Activated T-helper 1 cell treated with anti-CD3 and anti-CD28 coated beads, Interleukin-12 subunit alpha, Interleukin-12 subunit beta, Interleukin-2, Interleukin-4 antibody, amounts not matched to agents 30 ng/mL and 10 ng/mL and 1 ng/mL, durations not matched to agents 14 hours and 24 hours and 36 hours (primary cell): ENCODE measurements at regions of chr1 and their contacts with region 1.

Region 1: DNA sequence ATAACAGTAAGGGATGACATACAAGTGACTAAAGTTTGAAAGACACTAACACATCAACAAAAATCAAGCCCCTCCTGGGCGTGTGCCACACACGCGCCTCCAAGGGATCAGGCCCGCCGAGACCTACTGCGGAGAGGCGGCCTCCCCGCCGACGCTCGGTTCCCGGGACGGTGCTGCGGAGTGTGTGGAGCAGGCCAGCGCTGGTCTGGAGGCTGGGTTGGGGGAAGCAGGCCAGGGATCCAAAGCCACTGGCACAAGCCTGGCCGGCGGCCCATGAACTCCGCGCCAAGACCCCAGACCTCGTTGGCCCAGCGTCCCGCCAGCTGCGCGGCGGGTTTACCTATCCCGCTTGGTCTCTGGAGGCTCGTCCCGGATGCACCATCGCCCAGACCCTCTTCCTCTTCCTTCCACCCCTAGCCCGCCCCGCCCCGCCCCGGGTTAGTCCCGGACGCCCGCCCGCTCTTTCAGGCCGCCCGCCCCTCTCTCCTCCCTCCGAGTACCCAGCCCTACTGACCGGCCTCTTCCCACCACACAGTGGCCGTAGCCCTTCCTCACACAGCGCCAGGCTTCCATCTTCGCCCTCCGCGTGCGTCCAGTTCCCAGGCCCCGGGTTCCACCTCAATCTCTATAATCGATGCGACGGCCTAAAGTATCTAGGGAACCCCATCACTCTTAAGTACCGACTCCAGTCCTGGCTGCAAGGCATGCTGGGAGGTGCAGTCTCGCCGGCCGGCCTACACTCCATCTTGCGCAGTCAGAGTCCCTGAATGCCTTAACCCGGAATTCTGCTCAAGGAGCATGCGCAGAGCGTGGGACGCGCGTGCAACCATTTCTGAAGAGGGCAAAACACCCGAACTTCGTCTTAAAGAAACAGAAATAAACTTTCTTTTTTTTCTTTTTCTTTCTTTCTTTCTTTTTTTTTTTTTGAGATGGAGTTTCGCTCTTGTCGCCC is at the start of gene ANGEL2:
- DNase-seq: peak; percentile 95
- H3K4me3 Mint-ChIP-seq: peak within 1 kb of the TSS; percentile 99
- H3K27ac Mint-ChIP-seq: peak within 1 kb of the TSS; percentile 99
- H3K4me1 Mint-ChIP-seq: peaks cover 35% of the 10 kb centered on the region
- H3K27me3 Mint-ChIP-seq: peaks cover 9% of the 10 kb centered on the region
- total RNA-seq, gene ANGEL2: 44.2 and 46.1 TPM in 2 replicates

Region 2: DNA sequence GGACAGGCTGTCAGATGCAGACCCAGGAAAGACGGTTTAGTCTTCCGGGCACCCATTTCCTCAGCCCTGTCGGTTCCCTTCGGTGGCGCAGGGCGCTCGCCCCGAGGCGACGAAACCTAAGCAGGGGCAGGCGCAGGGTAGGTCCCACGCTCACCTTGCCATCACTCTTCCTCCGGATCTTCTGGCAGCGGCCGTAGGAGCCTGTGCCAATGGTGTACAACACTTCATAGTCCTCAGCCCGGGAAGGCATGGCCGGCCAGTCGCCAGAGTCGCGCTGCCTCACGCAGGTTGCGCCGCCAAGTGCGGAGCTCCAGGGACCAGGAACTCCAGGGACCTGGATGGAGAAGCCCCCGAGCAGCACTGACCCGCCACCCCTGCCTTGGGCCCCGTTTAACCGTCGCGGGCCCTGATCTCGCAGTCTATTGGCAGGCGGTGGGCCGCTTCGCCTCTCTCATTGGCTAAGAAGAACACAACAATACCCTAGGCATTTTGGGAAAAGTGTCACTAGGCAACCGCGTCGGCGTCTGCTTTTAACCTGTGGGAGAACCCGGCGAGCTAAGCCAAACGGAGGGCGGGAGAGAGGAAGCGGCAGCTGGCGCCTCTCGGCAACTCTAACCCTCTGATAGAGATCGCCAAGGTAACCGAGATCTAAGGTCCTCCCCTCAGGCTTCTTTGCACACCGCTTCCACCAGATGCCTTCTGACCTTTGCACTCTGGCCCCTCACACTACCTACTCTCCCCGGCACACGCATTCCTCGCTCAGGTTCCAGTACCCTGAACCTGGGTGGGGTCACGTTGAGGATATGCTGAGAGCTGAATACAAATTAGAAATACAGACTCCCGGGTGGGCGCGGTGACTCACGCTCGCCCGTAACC is 1339.9 kb before region 1 on chr1 and contains the start of gene NEK2:
- intact Hi-C with region 1: loop called (anchors 10 kb)
- DNase-seq: peak; percentile 87
- H3K4me3 Mint-ChIP-seq: peak within 1 kb of the TSS; percentile 95
- H3K27ac Mint-ChIP-seq: peak within 1 kb of the TSS; percentile 80
- H3K4me1 Mint-ChIP-seq: peaks cover 42% of the 10 kb centered on the region
- H3K27me3 Mint-ChIP-seq: no peaks in the 10 kb centered on the region
- total RNA-seq, gene NEK2: 13.9 and 18.9 TPM in 2 replicates

Region 3: GRCh38 chr1:212558693-212559480 is 456.5 kb before region 1 on chr1:
- intact Hi-C with region 1: loop called (anchors 2 kb)
- DNase-seq: peak; percentile 88
- H3K4me3 Mint-ChIP-seq: peak overlapping the region; percentile 61
- H3K27ac Mint-ChIP-seq: peak overlapping the region; percentile 93
- H3K4me1 Mint-ChIP-seq: peaks cover 10% of the 10 kb centered on the region
- H3K27me3 Mint-ChIP-seq: peaks cover 38% of the 10 kb centered on the region

Region 4: GRCh38 chr1:212791676-212792395 is 223.5 kb before region 1 on chr1 and contains the starts of genes NSL1 and TATDN3:
- intact Hi-C with region 1: loop called (anchors 1 kb)
- DNase-seq: peak; percentile 93
- H3K4me3 Mint-ChIP-seq: peak within 1 kb of the TSS; percentile 99
- H3K27ac Mint-ChIP-seq: peak within 1 kb of the TSS; percentile 98
- H3K4me1 Mint-ChIP-seq: peaks cover 30% of the 10 kb centered on the region
- H3K27me3 Mint-ChIP-seq: no peaks in the 10 kb centered on the region
- total RNA-seq, gene NSL1: 40.2 and 44.7 TPM in 2 replicates
- total RNA-seq, gene TATDN3: 14.4 and 18.5 TPM in 2 replicates

Region 5: GRCh38 chr1:212950243-212951125 is 64.9 kb before region 1 on chr1 and contains the start of gene VASH2:
- intact Hi-C with region 1: loop called (anchors 1 kb)
- DNase-seq: peak; percentile 61
- H3K4me3 Mint-ChIP-seq: peak within 1 kb of the TSS; percentile 82
- H3K27ac Mint-ChIP-seq: no peak within 1 kb of the TSS
- H3K4me1 Mint-ChIP-seq: peaks cover 6% of the 10 kb centered on the region
- H3K27me3 Mint-ChIP-seq: peaks cover 52% of the 10 kb centered on the region
- total RNA-seq, gene VASH2: 0.10 and 0.39 TPM in 2 replicates

Region 6: DNA sequence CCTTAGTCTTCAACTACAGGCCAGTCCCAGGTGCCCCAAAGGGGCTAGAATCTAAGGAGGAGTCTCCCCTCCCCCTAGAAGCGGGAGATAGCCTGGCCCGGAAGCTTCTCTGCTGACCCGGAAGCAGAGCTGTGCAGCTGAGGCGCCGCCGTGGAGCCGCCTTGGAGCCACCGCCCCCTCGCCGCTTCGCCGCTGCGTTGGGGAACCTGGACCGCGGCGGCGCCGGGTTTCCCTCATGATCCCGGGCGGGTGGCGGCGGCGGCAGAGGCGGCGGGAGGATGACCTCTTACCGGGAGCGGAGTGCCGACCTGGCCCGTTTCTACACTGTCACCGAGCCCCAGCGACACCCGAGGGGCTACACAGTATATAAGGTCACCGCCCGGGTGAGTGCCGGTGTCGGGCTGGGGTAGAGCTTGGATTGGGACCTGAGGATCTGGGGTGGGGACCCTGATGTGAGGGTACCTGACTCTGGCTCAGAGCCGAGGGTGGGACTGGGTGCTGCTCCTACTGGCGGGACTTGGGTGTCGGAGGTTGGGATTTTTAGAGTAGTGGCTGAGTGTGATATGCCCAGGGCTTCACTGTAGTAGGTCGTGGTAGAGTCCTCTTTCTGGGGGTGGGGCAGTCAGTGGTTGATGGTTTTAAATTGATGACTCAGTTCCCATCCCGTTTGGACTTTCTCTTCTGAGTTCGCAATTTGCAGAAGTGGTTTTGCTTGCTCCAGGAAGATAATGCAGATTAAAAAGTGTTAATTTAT is 35.9 kb after region 1 on chr1 and contains the start of gene RPS6KC1:
- intact Hi-C with region 1: loop called (anchors 1 kb)
- DNase-seq: peak; percentile 74
- H3K4me3 Mint-ChIP-seq: peak within 1 kb of the TSS; percentile 96
- H3K27ac Mint-ChIP-seq: peak within 1 kb of the TSS; percentile 90
- H3K4me1 Mint-ChIP-seq: peaks cover 37% of the 10 kb centered on the region
- H3K27me3 Mint-ChIP-seq: peaks cover 9% of the 10 kb centered on the region
- total RNA-seq, gene RPS6KC1: 7.2 and 7.5 TPM in 2 replicates

Region 7: GRCh38 chr1:213067352-213067751 is 52.0 kb after region 1 on chr1:
- intact Hi-C with region 1: no loop called
- DNase-seq: no peak
- H3K4me3 Mint-ChIP-seq: no peak overlapping the region
- H3K27ac Mint-ChIP-seq: no peak overlapping the region
- H3K4me1 Mint-ChIP-seq: peaks cover 21% of the 10 kb centered on the region
- H3K27me3 Mint-ChIP-seq: no peaks in the 10 kb centered on the region